Adrenal gland (tissue), 19 donors: ENCODE measurements at regions of chr17 and their contacts with region 1.

Region 1: GRCh38 chr17:41655611-41656351 is 31.4 kb upstream of the KRT17 start:
- DNase-seq: peak in 1 of 7 donors; percentile 64
- H3K4me3 ChIP-seq: no peak overlapping the region
- H3K27ac ChIP-seq: peak overlapping the region in 2 of 5 donors; percentile 8 to 58
- H3K4me1 ChIP-seq: no peaks in the 10 kb centered on the region
- H3K27me3 ChIP-seq: no peaks in the 10 kb centered on the region
- CTCF ChIP-seq: no peak
- POLR2A ChIP-seq: no peak

Region 2: DNA sequence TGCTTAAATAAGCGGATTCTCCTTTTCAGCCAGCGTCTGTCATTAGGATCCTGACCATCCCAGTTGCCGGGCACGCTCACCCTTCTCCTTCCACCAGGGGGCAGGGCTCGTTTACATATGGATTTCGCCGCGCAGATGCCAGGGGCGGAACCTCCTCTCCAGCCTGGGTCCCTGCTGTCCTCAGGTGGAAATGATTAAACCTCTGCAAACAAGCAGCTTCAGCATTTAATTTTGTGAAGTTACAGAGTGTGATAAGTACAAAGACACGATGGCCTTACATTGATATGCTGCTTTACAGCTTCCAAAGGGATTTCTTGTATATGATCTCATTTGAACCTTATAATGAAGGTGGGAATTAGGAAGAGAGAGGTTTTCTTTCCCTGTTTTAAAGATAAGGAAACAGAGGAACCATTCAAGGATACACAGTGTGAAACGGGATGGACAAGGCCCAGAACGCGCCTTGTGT is 852.1 kb before region 1 on chr17:
- intact Hi-C with region 1: loop called in 1 of 2 experiments (anchors 10 kb)
- DNase-seq: peak; percentile 66 to 88 (median 77)
- H3K4me3 ChIP-seq: no peak overlapping the region
- H3K27ac ChIP-seq: no peak overlapping the region
- H3K4me1 ChIP-seq: no peaks in the 10 kb centered on the region
- H3K27me3 ChIP-seq: peaks cover 55% of the 10 kb centered on the region
- CTCF ChIP-seq: peak; percentile 70 to 82 (median 78)
- POLR2A ChIP-seq: no peak

Region 3: DNA sequence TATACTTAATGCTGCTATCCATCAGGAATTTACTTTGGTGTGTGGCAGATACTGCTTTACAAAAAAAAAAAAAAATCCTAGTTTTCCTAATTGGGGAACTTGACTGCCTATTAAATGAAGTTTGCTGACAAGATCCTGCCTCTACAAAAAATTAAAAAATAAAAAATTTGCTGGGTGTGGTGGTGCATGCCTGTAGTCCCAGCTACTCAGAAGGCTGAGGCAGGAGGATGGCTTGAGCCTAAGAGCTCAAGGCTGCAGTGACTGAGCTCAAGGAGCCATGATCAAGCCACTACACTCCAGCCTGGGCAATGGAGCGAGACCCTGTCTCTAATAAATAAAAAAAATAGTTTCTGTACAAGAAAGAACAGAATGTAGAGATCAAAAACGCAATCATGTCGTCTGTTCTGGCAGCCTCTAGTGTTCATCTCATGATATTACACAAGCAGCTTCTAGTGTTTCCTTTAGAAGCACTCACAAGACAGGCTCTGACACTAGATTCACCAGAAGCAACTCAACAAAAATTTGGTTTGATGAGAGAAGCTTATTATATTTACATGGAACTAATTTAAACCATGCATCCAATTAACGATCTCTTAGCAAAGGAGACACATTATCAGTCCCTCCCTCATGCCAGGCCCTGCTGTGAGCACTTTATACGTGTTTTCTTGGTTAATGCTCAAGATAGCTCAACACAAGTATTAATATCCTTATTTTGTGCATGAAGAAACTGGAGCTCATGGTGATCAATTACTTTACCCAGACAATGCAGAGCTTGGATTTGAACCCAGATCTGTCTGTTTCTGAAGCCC is 333.5 kb before region 1 on chr17:
- intact Hi-C with region 1: loop called in 1 of 2 experiments (anchors 10 kb)
- DNase-seq: peak in 1 of 7 donors; percentile 23
- H3K4me3 ChIP-seq: no peak overlapping the region
- H3K27ac ChIP-seq: no peak overlapping the region
- H3K4me1 ChIP-seq: no peaks in the 10 kb centered on the region
- H3K27me3 ChIP-seq: no peaks in the 10 kb centered on the region
- CTCF ChIP-seq: peak; percentile 57 to 75 (median 72)
- POLR2A ChIP-seq: no peak

Region 4: DNA sequence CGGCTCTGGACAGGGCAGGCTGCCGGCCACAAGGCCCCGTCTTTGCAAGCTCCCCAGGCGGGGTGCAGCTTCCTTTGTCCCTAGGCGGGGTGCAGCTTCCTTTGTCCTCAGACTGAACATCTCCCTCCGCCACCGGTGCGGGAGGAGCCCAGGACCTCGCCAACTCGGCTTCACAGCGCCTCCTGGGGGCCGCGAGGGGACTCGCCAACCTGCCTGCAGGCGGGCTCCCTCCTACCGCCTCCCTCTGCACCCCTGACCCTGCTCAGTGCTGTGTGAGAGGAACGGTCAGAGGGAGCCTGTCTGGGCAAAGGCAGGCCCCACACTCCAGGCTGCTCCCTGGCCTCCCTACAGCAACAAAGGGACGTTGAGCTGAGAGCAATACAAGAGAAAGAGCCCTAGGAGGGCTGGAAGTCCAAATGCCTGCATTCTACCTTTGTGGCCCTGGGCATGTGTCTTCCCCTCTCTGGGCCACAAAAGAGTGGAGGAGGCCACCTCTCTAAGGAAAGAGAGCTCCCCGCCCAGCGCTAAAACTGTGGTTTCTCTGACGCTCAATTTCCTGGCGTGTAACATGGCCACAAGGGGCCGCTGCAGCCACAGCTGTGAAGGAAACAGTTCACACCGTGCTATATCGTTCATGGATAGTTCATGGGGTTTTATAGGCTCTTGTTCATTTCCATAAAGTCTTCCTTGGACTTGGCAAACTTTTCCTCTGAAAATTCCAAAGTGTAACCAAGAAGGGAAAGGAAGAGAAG is 106.8 kb before region 1 on chr17:
- intact Hi-C with region 1: loop called in 1 of 2 experiments (anchors 5 kb)
- DNase-seq: peak; percentile 79 to 93 (median 84)
- H3K4me3 ChIP-seq: peak overlapping the region in 1 of 4 donors; percentile 26
- H3K27ac ChIP-seq: peak overlapping the region in 3 of 5 donors; percentile 37 to 72 (median 57)
- H3K4me1 ChIP-seq: peaks cover 15 to 19% of the 10 kb centered on the region in 2 donors
- H3K27me3 ChIP-seq: no peaks in the 10 kb centered on the region
- CTCF ChIP-seq: peak; percentile 61 to 96 (median 84)
- POLR2A ChIP-seq: no peak

Region 5: GRCh38 chr17:42039794-42040763 is 384.3 kb after region 1 on chr17:
- intact Hi-C with region 1: no loop called
- DNase-seq: peak in 2 of 7 donors; percentile 18 to 30
- H3K4me3 ChIP-seq: no peak overlapping the region
- H3K27ac ChIP-seq: no peak overlapping the region
- H3K4me1 ChIP-seq: no peaks in the 10 kb centered on the region
- H3K27me3 ChIP-seq: no peaks in the 10 kb centered on the region
- CTCF ChIP-seq: no peak
- POLR2A ChIP-seq: no peak